OCI-LY7 (cell line): ENCODE measurements at regions of chr11 and their contacts with region 1.

Region 1: DNA sequence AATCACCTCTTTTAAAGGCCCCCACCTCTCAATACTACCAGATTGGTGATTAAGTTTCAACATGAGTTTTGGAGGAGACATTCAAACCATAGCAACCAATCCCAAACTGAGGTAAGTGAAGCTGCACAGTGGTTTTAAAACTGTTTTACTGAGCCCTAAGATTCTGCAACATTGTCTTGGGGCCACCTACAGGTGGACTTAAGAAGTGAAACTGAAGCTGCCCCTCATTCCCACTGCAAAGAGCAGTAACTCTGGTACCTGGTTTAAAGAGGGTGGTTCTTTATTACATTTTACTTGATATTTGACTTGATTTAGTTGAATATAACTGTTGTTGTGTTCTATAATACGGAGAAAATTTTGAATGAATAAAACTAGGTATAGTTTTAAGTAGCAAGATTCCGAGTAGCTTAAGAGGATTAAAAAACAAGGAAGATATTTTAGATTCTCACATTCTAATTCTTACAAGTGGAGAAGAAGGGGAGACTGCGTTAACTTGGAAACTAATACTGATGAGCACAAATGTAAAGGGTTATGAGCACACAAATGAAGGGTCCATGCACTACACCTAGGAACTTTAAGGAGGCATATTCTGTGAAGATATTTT is 26.7 kb downstream of the SYT9 start:
- DNase-seq: peak; percentile 44
- H3K4me3 ChIP-seq: no peak overlapping the region
- H3K27ac ChIP-seq: no peak overlapping the region
- H3K4me1 ChIP-seq: no peaks in the 10 kb centered on the region
- CTCF ChIP-seq: peak; percentile 83

Region 2: DNA sequence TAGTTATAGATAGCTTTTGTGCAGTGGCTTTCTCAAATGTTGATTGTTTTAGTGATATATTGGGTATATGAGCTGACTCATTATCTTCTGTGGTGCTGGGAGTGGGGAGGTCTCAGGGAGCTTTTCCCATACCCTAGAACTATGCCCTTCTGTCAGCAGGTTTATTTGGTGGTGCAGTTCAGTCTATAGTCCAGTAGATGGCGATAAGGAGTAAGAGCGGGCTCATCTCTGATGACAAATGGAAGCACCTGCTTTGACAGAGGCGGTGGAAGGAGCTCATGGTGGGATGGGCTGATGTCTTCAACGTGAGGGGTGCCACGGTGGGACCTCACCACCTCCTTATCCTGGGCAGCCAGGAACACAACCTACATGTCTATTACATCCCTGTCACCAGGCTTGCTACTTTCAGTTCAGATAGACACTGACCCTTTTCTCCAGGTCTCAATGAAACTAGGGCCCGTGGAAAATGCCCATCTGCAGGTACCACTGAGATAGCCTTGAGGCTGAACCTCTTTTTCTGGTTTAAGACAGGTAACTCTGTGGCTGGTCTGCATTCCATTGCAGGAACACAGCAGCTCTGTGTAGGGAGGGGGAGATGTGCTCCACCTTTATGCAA is 465.9 kb before region 1 on chr11:
- CTCF ChIA-PET with region 1: no interaction called
- POLR2A ChIA-PET with region 1: no interaction called
- intact Hi-C with region 1: loop called (anchors 10 kb)
- DNase-seq: peak; percentile 61
- H3K4me3 ChIP-seq: no peak overlapping the region
- H3K27ac ChIP-seq: no peak overlapping the region
- H3K4me1 ChIP-seq: no peaks in the 10 kb centered on the region
- CTCF ChIP-seq: peak; percentile 95

Region 3: GRCh38 chr11:7143908-7144307 is 134.5 kb before region 1 on chr11:
- CTCF ChIA-PET with region 1: no interaction called
- POLR2A ChIA-PET with region 1: no interaction called
- intact Hi-C with region 1: no loop called
- DNase-seq: peak; percentile 8
- H3K4me3 ChIP-seq: no peak overlapping the region
- H3K27ac ChIP-seq: no peak overlapping the region
- H3K4me1 ChIP-seq: no peaks in the 10 kb centered on the region
- CTCF ChIP-seq: peak; percentile 59